ENCODE measurements at regions of chr6 and their contacts with region 1.

Region 1: GRCh38 chr6:106156863-106157262 is 70.7 kb downstream of the PRDM1 start:
- DNase-seq: no peak
- H3K4me3 ChIP-seq: no peak overlapping the region
- H3K4me3 Mint-ChIP-seq: no peak overlapping the region
- H3K27ac Mint-ChIP-seq: no peak overlapping the region
- H3K4me1 ChIP-seq: no peaks in the 10 kb centered on the region
- H3K4me1 Mint-ChIP-seq: no peaks in the 10 kb centered on the region
- H3K27me3 ChIP-seq: no peaks in the 10 kb centered on the region
- H3K27me3 Mint-ChIP-seq: no peaks in the 10 kb centered on the region
- CTCF ChIP-seq: no peak

Region 2: GRCh38 chr6:106114492-106115265 is 42.2 kb before region 1 on chr6:
- CTCF ChIA-PET with region 1: no interaction called
- POLR2A ChIA-PET with region 1: no interaction called
- intact Hi-C with region 1: loop called (anchors 1 kb)
- DNase-seq: no peak
- H3K4me3 ChIP-seq: no peak overlapping the region
- H3K4me3 Mint-ChIP-seq: no peak overlapping the region
- H3K27ac Mint-ChIP-seq: no peak overlapping the region
- H3K4me1 ChIP-seq: peaks cover 11% of the 10 kb centered on the region
- H3K4me1 Mint-ChIP-seq: no peaks in the 10 kb centered on the region
- H3K27me3 ChIP-seq: no peaks in the 10 kb centered on the region
- H3K27me3 Mint-ChIP-seq: no peaks in the 10 kb centered on the region
- CTCF ChIP-seq: no peak

Region 3: DNA sequence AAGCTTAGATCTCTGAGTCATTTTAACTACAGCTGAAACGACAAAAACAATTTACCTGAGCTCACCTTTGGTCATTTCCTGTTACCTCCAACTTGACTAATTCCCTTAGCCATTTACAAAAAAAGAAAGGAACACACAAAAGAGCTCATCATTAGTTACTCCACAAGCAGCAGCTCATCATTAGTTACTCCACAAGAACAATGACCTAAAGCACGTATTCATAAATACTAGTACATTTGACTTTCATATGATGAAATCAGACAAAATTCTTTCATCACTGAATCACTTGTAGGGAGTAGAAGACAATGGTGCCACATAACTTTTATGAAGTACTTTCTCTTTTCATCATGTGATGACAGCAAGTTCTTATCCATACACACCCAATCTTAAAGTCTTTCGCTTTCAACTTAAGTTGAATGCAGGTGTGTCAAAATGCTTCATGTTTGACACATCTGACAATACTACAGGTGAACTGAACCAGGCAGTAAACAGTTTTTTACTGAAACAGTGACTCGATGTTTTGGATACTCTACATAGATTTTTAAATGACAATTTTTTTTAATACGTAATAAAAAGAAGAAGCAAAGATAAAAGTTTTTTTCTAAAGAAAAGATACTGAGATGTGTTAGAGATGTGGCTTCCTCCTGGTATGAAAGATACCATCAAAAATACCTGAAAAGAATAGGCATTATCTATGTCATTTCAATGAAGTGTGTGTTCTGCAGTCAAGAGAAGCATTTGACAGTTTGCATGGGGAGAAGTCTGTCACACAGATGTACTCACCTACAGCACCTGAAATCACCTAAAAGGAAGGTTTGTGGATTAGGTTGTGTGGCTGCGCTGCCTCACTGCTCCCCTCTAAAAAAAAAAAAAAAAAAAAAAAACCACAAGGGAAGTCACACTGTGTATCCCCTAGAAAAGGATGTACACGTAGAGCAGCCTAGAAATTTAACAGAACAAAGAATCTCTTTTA is 38.4 kb after region 1 on chr6:
- CTCF ChIA-PET with region 1: no interaction called
- POLR2A ChIA-PET with region 1: no interaction called
- intact Hi-C with region 1: no loop called
- DNase-seq: no peak
- H3K4me3 ChIP-seq: no peak overlapping the region
- H3K4me3 Mint-ChIP-seq: no peak overlapping the region
- H3K27ac Mint-ChIP-seq: no peak overlapping the region
- H3K4me1 ChIP-seq: no peaks in the 10 kb centered on the region
- H3K4me1 Mint-ChIP-seq: peaks cover 7% of the 10 kb centered on the region
- H3K27me3 ChIP-seq: no peaks in the 10 kb centered on the region
- H3K27me3 Mint-ChIP-seq: no peaks in the 10 kb centered on the region
- CTCF ChIP-seq: no peak

Region 4: GRCh38 chr6:106244931-106245330 is 88.1 kb after region 1 on chr6:
- CTCF ChIA-PET with region 1: no interaction called
- POLR2A ChIA-PET with region 1: no interaction called
- intact Hi-C with region 1: no loop called
- DNase-seq: no peak
- H3K4me3 ChIP-seq: no peak overlapping the region
- H3K4me3 Mint-ChIP-seq: no peak overlapping the region
- H3K27ac Mint-ChIP-seq: no peak overlapping the region
- H3K4me1 ChIP-seq: no peaks in the 10 kb centered on the region
- H3K4me1 Mint-ChIP-seq: no peaks in the 10 kb centered on the region
- H3K27me3 ChIP-seq: no peaks in the 10 kb centered on the region
- H3K27me3 Mint-ChIP-seq: no peaks in the 10 kb centered on the region
- CTCF ChIP-seq: no peak

Region 5: DNA sequence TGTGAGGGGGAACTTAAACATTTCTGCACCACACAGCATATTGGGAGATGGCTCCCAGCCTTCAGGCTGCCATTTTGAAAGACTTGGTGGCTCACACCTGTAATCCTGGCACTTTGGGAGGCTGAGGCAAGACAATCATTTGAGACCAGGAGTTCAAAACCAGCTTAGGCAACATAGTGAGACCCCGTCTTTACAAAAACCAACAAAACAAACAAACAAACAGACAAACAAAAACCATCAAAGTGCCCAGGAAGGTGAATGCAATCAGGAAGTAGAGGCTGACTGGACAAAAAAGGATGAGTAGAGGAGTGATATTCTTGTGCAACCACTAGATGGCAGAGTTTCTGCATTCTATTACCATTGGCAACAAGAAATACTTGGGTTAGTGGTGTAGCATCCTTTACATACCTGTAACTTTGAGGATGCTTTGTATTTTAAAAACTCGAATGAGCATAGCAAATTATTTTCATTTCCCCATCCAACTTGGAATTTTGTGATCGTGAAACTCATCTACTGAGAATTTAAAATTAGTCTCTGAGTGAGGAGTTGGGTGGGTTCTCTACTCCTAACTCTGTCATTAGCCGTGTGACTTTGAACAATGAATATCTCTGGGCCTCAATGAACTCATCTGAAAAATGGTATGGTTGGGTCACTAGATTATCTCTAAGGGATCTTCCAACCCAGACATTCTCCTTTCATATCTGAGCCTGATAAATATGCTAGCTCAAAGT is 288.1 kb after region 1 on chr6:
- CTCF ChIA-PET with region 1: no interaction called
- POLR2A ChIA-PET with region 1: no interaction called
- intact Hi-C with region 1: no loop called
- DNase-seq: peak in 1 of 2 experiments; percentile 65
- H3K4me3 ChIP-seq: no peak overlapping the region
- H3K4me3 Mint-ChIP-seq: no peak overlapping the region
- H3K27ac Mint-ChIP-seq: no peak overlapping the region
- H3K4me1 ChIP-seq: peaks cover 8% of the 10 kb centered on the region
- H3K4me1 Mint-ChIP-seq: peaks cover 6% of the 10 kb centered on the region
- H3K27me3 ChIP-seq: no peaks in the 10 kb centered on the region; the same call in none of the 2 replicates
- H3K27me3 Mint-ChIP-seq: peaks cover 14% of the 10 kb centered on the region
- CTCF ChIP-seq: peak; percentile 64 to 65

Measured in Caco-2 (cell line).